Vagina (tissue), 2 donors: ENCODE measurements at regions of chr6 and their contacts with region 1.

Region 1: GRCh38 chr6:30616811-30617564 is at the start of gene PPP1R10:
- DNase-seq: peak; percentile 99 to 100
- H3K4me3 ChIP-seq: peak within 1 kb of the TSS; percentile 74 to 94
- H3K27ac ChIP-seq: peak within 1 kb of the TSS; percentile 99
- H3K4me1 ChIP-seq: peaks cover 39% of the 10 kb centered on the region
- H3K27me3 ChIP-seq: no peaks in the 10 kb centered on the region
- CTCF ChIP-seq: no peak
- POLR2A ChIP-seq: peak; percentile 98 to 100
- total RNA-seq, gene PPP1R10: 52.5 TPM

Region 2: DNA sequence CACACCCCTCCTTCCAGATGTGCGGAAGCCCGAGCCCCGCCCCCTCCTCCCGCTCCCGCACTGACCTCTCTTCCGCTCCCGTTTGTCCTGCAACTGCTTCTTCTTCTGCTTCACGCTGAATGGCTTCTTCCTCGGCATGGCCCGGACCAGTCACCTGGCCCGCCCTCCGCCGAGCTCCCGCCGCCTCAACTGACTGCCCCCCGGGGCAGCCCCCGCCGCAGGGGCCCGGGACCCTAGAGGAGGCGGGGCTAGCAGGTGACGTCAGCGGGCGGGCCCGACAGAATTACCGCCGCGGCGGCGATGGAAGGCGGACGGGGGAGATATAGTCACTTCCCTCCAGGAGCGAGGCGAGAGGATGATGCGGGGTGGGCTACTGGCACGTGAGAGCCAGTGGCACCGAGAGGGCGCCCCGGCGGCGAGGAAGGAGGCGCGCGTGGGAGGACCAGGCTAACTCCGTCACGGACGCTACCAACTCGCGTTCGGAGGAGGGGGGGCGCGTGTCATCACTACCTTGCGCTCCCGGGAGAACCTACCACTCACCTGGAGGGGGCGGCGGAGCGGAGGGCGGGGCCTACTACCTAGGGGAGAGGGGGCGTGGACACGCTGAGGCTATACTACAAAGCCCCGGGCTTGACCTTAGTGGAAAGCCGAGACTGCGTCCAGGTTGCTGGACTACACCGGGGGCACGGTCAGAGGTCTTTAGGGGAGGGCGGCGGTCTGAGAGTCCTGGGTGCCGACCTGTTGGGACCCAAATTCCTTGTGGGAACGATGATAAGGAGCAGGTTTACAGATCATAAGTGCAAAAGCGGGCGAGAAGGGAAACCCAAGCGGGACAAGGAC is 60.7 kb before region 1 on chr6 and contains the start of gene GNL1:
- intact Hi-C with region 1: no loop called
- DNase-seq: peak in 1 of 2 donors; percentile 95
- H3K4me3 ChIP-seq: peak within 1 kb of the TSS; percentile 73 to 76
- H3K27ac ChIP-seq: peak within 1 kb of the TSS; percentile 97
- H3K4me1 ChIP-seq: peaks cover 33% of the 10 kb centered on the region
- H3K27me3 ChIP-seq: no peaks in the 10 kb centered on the region
- CTCF ChIP-seq: peak in 1 of 3 experiments; percentile 10
- POLR2A ChIP-seq: peak in 1 of 2 donors; percentile 62
- total RNA-seq, gene GNL1: 24.1 TPM

Region 3: DNA sequence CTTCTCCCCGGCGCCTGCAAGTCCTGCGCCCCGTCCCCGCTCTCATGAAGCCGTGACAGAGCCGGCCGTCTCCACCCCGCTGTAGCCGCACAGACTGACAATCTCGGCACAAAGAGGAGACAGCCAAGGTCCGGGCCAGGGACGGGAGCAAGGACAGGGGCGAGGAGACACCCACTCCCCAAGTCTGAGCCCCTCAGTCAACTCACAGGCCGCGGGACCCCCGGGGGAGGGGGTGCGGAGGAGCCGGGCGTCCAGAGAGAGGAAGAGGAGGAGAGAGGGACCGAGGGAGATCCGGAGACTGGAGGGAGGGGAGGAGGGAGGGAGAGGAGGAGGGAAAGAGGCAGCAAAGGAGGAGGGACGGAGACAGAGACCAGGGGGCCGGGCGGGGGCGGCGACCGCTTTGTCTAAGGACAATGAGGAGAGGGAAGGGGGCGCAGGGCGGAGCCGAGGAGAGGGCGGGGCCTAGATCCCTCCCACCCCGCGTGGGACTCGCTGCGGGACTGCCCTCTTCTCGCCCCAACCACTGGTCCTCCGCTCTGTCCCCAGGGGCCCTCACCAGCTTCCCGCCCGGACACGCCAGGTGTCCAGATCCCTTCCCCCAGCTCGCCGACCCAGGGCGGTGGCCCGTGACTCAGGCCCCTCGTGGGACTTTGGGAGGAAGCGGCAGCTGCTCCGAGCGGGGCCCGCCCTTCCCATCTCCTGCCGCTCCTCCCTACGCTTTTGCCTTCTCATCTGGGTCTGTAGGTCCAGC is 70.1 kb after region 1 on chr6:
- intact Hi-C with region 1: loop called (anchors 10 kb)
- DNase-seq: peak in 1 of 2 donors; percentile 99
- H3K4me3 ChIP-seq: peak overlapping the region; percentile 93 to 97
- H3K27ac ChIP-seq: peak overlapping the region; percentile 92
- H3K4me1 ChIP-seq: peaks cover 70% of the 10 kb centered on the region
- H3K27me3 ChIP-seq: no peaks in the 10 kb centered on the region
- CTCF ChIP-seq: no peak
- POLR2A ChIP-seq: peak in 1 of 2 donors; percentile 43